ENCODE measurements at regions of chr4 and their contacts with region 1.

Region 1: GRCh38 chr4:76733068-76733771 is 164.7 kb downstream of the SOWAHB start:
- DNase-seq: peak; percentile 54 to 63
- H3K4me3 ChIP-seq: no peak overlapping the region
- H3K27ac ChIP-seq: no peak overlapping the region
- H3K4me1 ChIP-seq: peaks cover 3% of the 10 kb centered on the region; the same call in 1 of the 2 replicates
- H3K27me3 ChIP-seq: no peaks in the 10 kb centered on the region
- CTCF ChIP-seq: peak; percentile 72

Region 2: DNA sequence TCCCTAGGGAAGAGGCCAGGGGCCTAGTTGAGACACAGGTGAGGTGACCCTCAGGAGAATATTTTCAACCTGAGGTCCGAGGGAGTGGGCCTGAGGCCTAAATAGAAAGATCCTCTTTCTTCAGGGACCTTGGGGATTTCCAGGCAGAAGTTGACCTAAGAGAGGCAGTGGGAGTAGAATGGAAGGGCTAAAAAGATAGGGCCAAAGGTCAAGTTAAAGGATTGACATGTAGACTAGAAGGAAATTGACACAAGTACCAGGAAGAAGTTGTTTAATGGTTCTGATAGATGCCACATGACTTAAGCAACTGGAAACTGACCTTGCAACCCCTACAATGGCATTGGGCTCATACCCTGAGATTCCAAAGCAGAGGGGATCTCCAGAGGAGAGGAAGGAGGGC is 221.3 kb before region 1 on chr4:
- CTCF ChIA-PET with region 1: interaction called, 3 read pairs
- POLR2A ChIA-PET with region 1: no interaction called
- intact Hi-C with region 1: loop called (anchors 1 kb)
- DNase-seq: no peak
- H3K4me3 ChIP-seq: no peak overlapping the region
- H3K27ac ChIP-seq: no peak overlapping the region
- H3K4me1 ChIP-seq: no peaks in the 10 kb centered on the region
- H3K27me3 ChIP-seq: no peaks in the 10 kb centered on the region
- CTCF ChIP-seq: no peak

Region 3: DNA sequence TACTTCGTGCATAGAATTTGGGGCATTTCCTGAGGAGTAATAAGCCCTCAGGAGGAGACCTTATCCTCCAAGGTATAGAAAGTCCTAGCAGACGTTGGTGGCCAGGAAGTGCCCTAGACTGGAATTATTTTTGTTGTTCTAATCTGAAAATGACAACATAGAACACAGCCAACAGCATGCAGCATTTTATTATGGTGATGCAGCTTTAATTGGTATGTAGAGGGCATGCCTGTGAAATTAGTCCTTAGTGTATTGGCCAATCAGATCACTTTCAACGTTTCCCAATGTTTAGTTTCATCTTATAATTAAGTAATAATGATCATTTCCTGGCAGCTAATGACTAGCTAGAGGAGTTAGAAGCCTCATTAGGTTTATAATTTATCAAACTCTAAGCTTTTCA is 99.0 kb before region 1 on chr4:
- CTCF ChIA-PET with region 1: no interaction called
- POLR2A ChIA-PET with region 1: interaction called, 13 read pairs
- intact Hi-C with region 1: no loop called
- DNase-seq: peak in 1 of 2 experiments; percentile 87
- H3K4me3 ChIP-seq: peak overlapping the region; percentile 28; the same call in 1 of the 2 replicates
- H3K27ac ChIP-seq: peak overlapping the region; percentile 76
- H3K4me1 ChIP-seq: peaks cover 57% of the 10 kb centered on the region
- H3K27me3 ChIP-seq: no peaks in the 10 kb centered on the region
- CTCF ChIP-seq: no peak

Region 4: DNA sequence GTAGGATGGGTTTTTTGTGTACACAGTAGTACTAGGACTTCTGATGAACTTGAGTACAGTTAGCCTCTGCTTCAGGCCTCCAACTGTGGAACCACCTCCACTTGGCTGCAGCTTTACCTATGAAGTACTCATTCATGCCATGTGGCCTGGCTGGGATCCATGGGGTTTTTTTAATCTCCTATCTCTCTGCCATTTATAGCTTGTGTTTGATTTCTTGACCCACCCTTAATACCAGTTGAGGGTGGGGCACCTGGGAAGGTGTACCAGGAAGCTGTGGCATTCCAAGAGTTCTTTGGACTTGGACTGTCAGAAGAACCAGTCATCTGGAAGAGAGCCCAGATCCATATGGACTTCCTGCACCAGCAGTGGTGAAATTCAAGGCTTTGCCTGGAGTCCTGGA is 68.1 kb before region 1 on chr4:
- CTCF ChIA-PET with region 1: no interaction called
- POLR2A ChIA-PET with region 1: no interaction called
- intact Hi-C with region 1: loop called (anchors 2 kb)
- DNase-seq: peak; percentile 81 to 92
- H3K4me3 ChIP-seq: no peak overlapping the region
- H3K27ac ChIP-seq: peak overlapping the region; percentile 80
- H3K4me1 ChIP-seq: peaks cover 29% of the 10 kb centered on the region
- H3K27me3 ChIP-seq: no peaks in the 10 kb centered on the region
- CTCF ChIP-seq: no peak

Region 5: DNA sequence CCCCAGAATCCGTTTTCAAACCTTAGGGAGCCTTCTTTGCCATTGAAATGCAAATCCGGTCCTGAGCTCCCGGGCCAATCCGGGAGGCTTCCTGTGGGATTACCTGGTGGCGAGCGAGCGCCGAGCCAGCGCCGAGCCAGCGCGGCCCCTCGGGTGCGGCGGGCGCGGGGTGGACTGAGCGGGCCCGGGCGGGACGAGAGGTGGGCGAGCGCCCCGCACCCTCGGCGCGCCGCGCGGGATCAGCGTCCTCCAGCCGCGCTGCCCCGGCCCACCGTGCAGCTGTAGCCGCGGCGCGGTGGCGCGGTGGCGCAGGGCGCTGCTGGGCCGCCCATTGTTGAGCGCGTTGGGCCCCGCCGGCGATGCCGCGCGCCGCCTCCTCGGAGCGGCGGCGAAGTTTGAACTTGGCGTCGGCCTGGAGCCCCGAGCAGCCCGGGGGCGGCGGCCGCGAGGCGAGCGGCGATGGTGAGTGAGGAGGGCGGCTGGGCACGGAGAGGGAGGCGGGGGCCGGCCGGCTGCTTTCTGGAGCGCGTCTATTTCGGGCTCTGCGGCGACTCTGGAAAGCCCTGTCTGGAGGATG is 43.9 kb before region 1 on chr4:
- CTCF ChIA-PET with region 1: no interaction called
- POLR2A ChIA-PET with region 1: interaction called, 5 read pairs
- intact Hi-C with region 1: loop called (anchors 2 kb)
- DNase-seq: peak; percentile 68
- H3K4me3 ChIP-seq: peak overlapping the region; percentile 92
- H3K27ac ChIP-seq: peak overlapping the region; percentile 78
- H3K4me1 ChIP-seq: peaks cover 43% of the 10 kb centered on the region
- H3K27me3 ChIP-seq: no peaks in the 10 kb centered on the region
- CTCF ChIP-seq: no peak

Measured in PC-9 (cell line).